CD8-positive, alpha-beta T cell (primary cell): ENCODE measurements at regions of chr4 and their contacts with region 1.

Region 1: GRCh38 chr4:99921174-99921573 is 25.2 kb downstream of the DNAJB14 start:
- DNase-seq: peak in 3 of 9 experiments; percentile 19 to 53 (median 24)
- ATAC-seq: peak; percentile 92
- H3K4me3 ChIP-seq: no peak overlapping the region
- H3K4me3 Mint-ChIP-seq: no peak overlapping the region
- H3K27ac ChIP-seq: no peak overlapping the region
- H3K27ac Mint-ChIP-seq: peak overlapping the region; percentile 78
- H3K4me1 ChIP-seq: peaks cover 12% of the 10 kb centered on the region
- H3K4me1 Mint-ChIP-seq: peaks cover 33% of the 10 kb centered on the region
- H3K27me3 ChIP-seq: no peaks in the 10 kb centered on the region
- H3K27me3 Mint-ChIP-seq: no peaks in the 10 kb centered on the region
- CTCF ChIP-seq: no peak

Region 2: DNA sequence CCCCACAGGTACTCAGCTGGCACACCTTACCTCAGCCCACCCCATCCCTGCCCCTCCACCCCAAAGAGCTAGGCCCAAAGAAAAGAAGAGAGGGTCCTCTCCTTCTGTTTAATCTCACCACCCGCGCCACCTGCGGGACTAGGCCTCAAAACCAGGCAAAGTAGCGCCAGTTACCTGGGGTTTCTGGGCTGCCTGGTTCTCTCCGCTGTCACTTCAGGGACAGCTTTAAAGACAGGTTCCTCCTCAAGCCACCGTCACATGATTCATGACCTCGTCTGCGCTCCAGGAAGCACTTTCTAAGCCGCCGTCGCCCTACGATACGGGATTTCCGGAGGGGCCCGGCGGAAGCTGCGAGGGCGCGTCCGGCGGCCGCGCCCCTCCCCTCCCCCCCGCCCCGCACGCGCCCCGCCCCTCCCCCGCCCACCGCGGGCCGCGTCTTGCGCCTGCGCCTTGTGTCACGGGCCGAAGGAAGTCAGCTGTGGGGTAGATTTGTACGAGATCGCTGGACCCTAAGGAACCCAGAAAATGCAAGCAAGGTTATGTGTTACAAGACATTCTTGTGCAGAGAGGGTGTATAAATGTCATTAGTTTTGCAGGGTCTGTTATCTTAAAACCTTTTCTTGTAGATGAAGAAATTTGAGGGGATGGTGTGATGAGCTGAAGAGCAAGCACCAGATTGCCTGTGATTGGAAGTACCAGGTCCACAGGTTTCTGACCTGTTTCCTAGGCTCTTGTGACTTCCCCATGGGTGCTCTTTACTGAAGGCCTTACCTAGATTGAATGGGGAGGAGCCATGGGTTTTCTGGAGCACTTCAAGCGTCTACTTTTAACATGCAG is 26.8 kb before region 1 on chr4 and contains the start of gene LAMTOR3:
- CTCF ChIA-PET with region 1: no interaction called
- POLR2A ChIA-PET with region 1: no interaction called
- intact Hi-C with region 1: loop called in 1 of 2 experiments (anchors 1 kb)
- DNase-seq: peak; percentile 80 to 97 (median 88)
- ATAC-seq: peak; percentile 94
- H3K4me3 ChIP-seq: peak within 1 kb of the TSS; percentile 68 to 80
- H3K4me3 Mint-ChIP-seq: peak within 1 kb of the TSS; percentile 97
- H3K27ac ChIP-seq: peak within 1 kb of the TSS; percentile 77 to 87
- H3K27ac Mint-ChIP-seq: peak within 1 kb of the TSS; percentile 98
- H3K4me1 ChIP-seq: peaks cover 30% of the 10 kb centered on the region
- H3K4me1 Mint-ChIP-seq: peaks cover 49% of the 10 kb centered on the region
- H3K27me3 ChIP-seq: no peaks in the 10 kb centered on the region
- H3K27me3 Mint-ChIP-seq: no peaks in the 10 kb centered on the region
- CTCF ChIP-seq: no peak
- total RNA-seq, gene LAMTOR3: 29.3 to 32.4 TPM

Region 3: GRCh38 chr4:99934891-99935290 is 13.7 kb after region 1 on chr4:
- CTCF ChIA-PET with region 1: no interaction called
- POLR2A ChIA-PET with region 1: no interaction called
- intact Hi-C with region 1: loop called in 1 of 2 experiments (anchors 2 kb)
- DNase-seq: no peak
- ATAC-seq: no peak
- H3K4me3 ChIP-seq: no peak overlapping the region
- H3K4me3 Mint-ChIP-seq: no peak overlapping the region
- H3K27ac ChIP-seq: no peak overlapping the region
- H3K27ac Mint-ChIP-seq: no peak overlapping the region
- H3K4me1 ChIP-seq: peaks cover 27% of the 10 kb centered on the region
- H3K4me1 Mint-ChIP-seq: peaks cover 49% of the 10 kb centered on the region
- H3K27me3 ChIP-seq: no peaks in the 10 kb centered on the region
- H3K27me3 Mint-ChIP-seq: no peaks in the 10 kb centered on the region
- CTCF ChIP-seq: no peak